ENCODE measurements at regions of chr1 and their contacts with region 1.

Region 1: GRCh38 chr1:52636721-52637695 is 4.0 kb downstream of the SHISAL2A start:
- DNase-seq: peak; percentile 87
- ATAC-seq: peak; percentile 89
- H3K4me3 ChIP-seq: no peak overlapping the region; the same call in 1 of the 2 replicates
- H3K27ac ChIP-seq: peak overlapping the region; percentile 83
- H3K4me1 ChIP-seq: peaks cover 43% of the 10 kb centered on the region
- H3K27me3 ChIP-seq: peaks cover 1 to 8% of the 10 kb centered on the region in 2 experiments; a peak in 2 of 4 replicates
- CTCF ChIP-seq: no peak
- EP300 ChIP-seq: peak; percentile 65 to 89; a peak in 3 of 4 replicates
- POLR2A ChIP-seq: peak; percentile 61
- RAD21 ChIP-seq: peak; percentile 21; the same call in 1 of the 2 replicates

Region 2: DNA sequence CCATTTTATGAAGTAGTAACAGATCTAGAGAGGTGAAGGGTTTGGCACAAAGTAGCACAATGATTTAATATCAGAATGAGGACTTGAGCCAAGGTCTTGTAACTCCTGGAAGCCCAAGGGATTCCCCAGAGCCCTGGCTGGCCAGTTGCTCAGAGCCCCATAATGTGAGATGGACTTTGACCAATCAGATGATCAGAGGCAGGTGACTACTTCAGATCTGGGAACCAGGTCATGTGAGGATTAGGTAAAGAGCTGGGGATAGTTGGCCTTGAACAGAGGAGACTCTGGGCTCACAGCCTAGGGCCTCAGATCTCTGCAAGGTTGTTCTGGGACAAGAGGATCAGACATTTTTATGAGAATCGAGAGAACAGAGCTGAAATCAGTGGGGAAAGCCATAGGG is 14.9 kb after region 1 on chr1:
- CTCF ChIA-PET with region 1: interaction called, 3 read pairs
- POLR2A ChIA-PET with region 1: interaction called, 4 read pairs
- RAD21 ChIA-PET with region 1: no interaction called
- SMC1A ChIA-PET with region 1: interaction called, 10 read pairs
- in situ Hi-C with region 1: no loop called
- intact Hi-C with region 1: no loop called
- DNase-seq: no peak
- ATAC-seq: no peak
- H3K4me3 ChIP-seq: no peak overlapping the region
- H3K27ac ChIP-seq: no peak overlapping the region
- H3K4me1 ChIP-seq: no peaks in the 10 kb centered on the region
- H3K27me3 ChIP-seq: no peaks in the 10 kb centered on the region
- CTCF ChIP-seq: no peak
- EP300 ChIP-seq: no peak
- POLR2A ChIP-seq: no peak
- RAD21 ChIP-seq: no peak

Region 3: GRCh38 chr1:52659356-52659755 is 22.3 kb after region 1 on chr1:
- CTCF ChIA-PET with region 1: interaction called, 3 read pairs
- POLR2A ChIA-PET with region 1: interaction called, 6 read pairs
- RAD21 ChIA-PET with region 1: interaction called, 11 read pairs
- SMC1A ChIA-PET with region 1: interaction called, 26 read pairs
- in situ Hi-C with region 1: no loop called
- intact Hi-C with region 1: no loop called
- DNase-seq: peak; percentile 38
- ATAC-seq: peak; percentile 89
- H3K4me3 ChIP-seq: no peak overlapping the region
- H3K27ac ChIP-seq: no peak overlapping the region
- H3K4me1 ChIP-seq: peaks cover 5% of the 10 kb centered on the region
- H3K27me3 ChIP-seq: no peaks in the 10 kb centered on the region
- CTCF ChIP-seq: no peak
- EP300 ChIP-seq: peak in 1 of 2 experiments; percentile 70; a peak in 1 of 4 replicates
- POLR2A ChIP-seq: no peak
- RAD21 ChIP-seq: no peak

Measured in GM12878 (cell line).